ENCODE measurements at regions of chr1 and their contacts with region 1.

Region 1: GRCh38 chr1:171226747-171227370 is 21.4 kb upstream of the FMO1 start:
- DNase-seq: peak; percentile 37
- ATAC-seq: peak; percentile 73
- H3K4me3 Mint-ChIP-seq: no peak overlapping the region
- H3K27ac Mint-ChIP-seq: no peak overlapping the region
- H3K4me1 Mint-ChIP-seq: no peaks in the 10 kb centered on the region
- H3K27me3 Mint-ChIP-seq: peaks cover 4% of the 10 kb centered on the region

Region 2: GRCh38 chr1:170967042-170967910 is 259.6 kb before region 1 on chr1:
- CTCF ChIA-PET with region 1: interaction called, 12 read pairs
- POLR2A ChIA-PET with region 1: no interaction called
- intact Hi-C with region 1: loop called in 1 of 2 experiments (anchors 1 kb)
- DNase-seq: peak; percentile 4
- ATAC-seq: no peak
- H3K4me3 Mint-ChIP-seq: no peak overlapping the region
- H3K27ac Mint-ChIP-seq: no peak overlapping the region
- H3K4me1 Mint-ChIP-seq: no peaks in the 10 kb centered on the region
- H3K27me3 Mint-ChIP-seq: peaks cover 22% of the 10 kb centered on the region

Region 3: GRCh38 chr1:171180670-171181069 is 46.2 kb before region 1 on chr1:
- CTCF ChIA-PET with region 1: no interaction called
- POLR2A ChIA-PET with region 1: no interaction called
- intact Hi-C with region 1: no loop called
- DNase-seq: no peak
- ATAC-seq: no peak
- H3K4me3 Mint-ChIP-seq: no peak overlapping the region
- H3K27ac Mint-ChIP-seq: no peak overlapping the region
- H3K4me1 Mint-ChIP-seq: no peaks in the 10 kb centered on the region
- H3K27me3 Mint-ChIP-seq: peaks cover 17% of the 10 kb centered on the region

Region 4: GRCh38 chr1:171204296-171204695 is 22.6 kb before region 1 on chr1:
- CTCF ChIA-PET with region 1: no interaction called
- POLR2A ChIA-PET with region 1: no interaction called
- intact Hi-C with region 1: no loop called
- DNase-seq: no peak
- ATAC-seq: no peak
- H3K4me3 Mint-ChIP-seq: no peak overlapping the region
- H3K27ac Mint-ChIP-seq: no peak overlapping the region
- H3K4me1 Mint-ChIP-seq: no peaks in the 10 kb centered on the region
- H3K27me3 Mint-ChIP-seq: peaks cover 16% of the 10 kb centered on the region

Region 5: DNA sequence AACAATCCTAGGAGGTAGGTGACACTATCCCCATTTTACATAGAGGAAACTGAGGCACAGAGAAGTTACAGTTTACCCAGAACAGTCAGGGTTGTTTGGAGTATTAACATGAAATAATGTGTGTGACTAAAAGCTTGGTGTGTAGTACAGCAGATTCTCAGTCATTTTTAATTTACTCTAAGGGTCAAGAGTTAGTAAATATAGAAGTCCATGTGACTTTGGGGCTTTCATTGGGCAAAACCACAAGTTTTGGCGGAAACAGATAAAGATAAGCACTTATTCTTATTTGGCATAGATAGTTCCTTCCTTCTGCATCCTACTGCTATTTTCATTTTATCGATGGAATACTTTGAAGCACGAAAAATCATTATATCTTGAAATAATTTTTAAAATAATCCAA is 743.0 kb after region 1 on chr1:
- CTCF ChIA-PET with region 1: no interaction called
- POLR2A ChIA-PET with region 1: no interaction called
- intact Hi-C with region 1: no loop called
- DNase-seq: no peak
- ATAC-seq: no peak
- H3K4me3 Mint-ChIP-seq: no peak overlapping the region
- H3K27ac Mint-ChIP-seq: no peak overlapping the region
- H3K4me1 Mint-ChIP-seq: no peaks in the 10 kb centered on the region
- H3K27me3 Mint-ChIP-seq: no peaks in the 10 kb centered on the region